Cardiac septum (tissue), 1 donor: ENCODE measurements at regions of chr4 and their contacts with region 1.

Region 1: GRCh38 chr4:111854494-111855087 is 290.7 kb upstream of the FAM241A start:
- DNase-seq: no peak

Region 2: GRCh38 chr4:110712486-110712885 is 1142.1 kb before region 1 on chr4:
- intact Hi-C with region 1: no loop called
- DNase-seq: no peak

Region 3: GRCh38 chr4:111283061-111283677 is 571.4 kb before region 1 on chr4:
- intact Hi-C with region 1: no loop called
- DNase-seq: no peak

Region 4: GRCh38 chr4:111641955-111642579 is 212.5 kb before region 1 on chr4:
- intact Hi-C with region 1: loop called (anchors 10 kb)
- DNase-seq: no peak